ENCODE measurements at regions of chr2 and their contacts with region 1.

Region 1: DNA sequence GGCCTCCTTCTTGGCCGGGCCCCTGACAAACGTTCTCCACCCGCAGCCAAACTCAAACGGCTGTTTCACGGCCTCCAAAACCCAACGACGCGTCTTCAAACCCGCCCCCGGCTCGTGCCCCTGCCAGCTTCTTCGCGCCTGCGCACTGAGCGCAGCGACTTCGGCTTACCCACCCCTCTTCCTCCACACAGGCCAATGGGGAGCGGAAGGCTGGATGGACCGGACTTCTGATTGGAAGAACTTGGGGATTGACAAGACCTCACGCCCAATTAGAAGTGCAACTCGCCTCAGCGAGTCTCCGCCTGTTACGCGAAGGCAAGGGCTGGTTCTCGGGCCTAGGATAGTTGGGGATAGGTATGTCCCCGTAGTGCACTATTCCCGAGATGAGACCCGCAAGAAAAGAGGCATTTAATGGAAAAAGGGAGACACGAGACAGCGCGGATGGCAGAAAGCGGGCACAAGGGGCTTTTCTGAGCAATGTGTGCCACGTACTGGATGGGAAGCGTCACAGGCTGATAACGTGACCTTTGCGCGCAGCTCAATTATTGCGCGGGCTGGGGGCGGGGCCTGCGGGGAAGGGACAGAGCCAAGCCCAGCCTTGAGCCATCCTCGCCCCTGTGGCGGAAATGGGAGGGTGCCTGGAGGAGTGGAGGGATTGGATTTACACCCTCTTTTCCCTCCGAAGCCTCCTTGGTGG is at the start of gene LAPTM4A:
- DNase-seq: peak; percentile 100
- H3K4me3 ChIP-seq: peak within 1 kb of the TSS; percentile 51 to 97 (median 83)
- H3K27ac ChIP-seq: peak within 1 kb of the TSS; percentile 94
- H3K4me1 ChIP-seq: peaks cover 34% of the 10 kb centered on the region
- H3K27me3 ChIP-seq: peaks cover 10% of the 10 kb centered on the region in 2 experiments
- CTCF ChIP-seq: no peak
- POLR2A ChIP-seq: peak; percentile 38
- total RNA-seq, gene LAPTM4A: 154 and 155 TPM in 2 replicates

Region 2: DNA sequence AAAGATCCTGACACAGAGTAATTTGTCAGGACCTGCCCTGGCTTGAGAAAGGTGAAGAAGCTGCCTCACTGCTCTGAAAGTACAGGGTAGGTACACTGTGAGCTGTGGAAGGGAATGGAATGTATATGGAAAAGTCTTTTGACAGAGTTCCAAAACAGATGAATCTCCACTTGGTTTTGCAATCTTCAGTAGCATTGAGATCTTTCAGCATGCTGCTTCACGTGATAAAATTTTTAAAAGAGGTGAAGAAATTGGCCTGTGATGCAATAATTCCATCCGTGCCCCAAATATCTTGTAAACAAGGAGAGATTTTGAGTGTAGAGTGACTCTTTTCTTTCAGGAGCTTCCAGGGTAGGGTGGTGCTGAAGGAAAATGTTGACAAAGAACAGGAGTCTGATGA is 816.4 kb before region 1 on chr2:
- CTCF ChIA-PET with region 1: no interaction called
- POLR2A ChIA-PET with region 1: no interaction called
- dilution Hi-C with region 1: no loop called
- intact Hi-C with region 1: no loop called
- DNase-seq: no peak
- H3K4me3 ChIP-seq: no peak overlapping the region
- H3K27ac ChIP-seq: no peak overlapping the region
- H3K4me1 ChIP-seq: no peaks in the 10 kb centered on the region
- H3K27me3 ChIP-seq: no peaks in the 10 kb centered on the region
- CTCF ChIP-seq: no peak
- POLR2A ChIP-seq: no peak

Region 3: DNA sequence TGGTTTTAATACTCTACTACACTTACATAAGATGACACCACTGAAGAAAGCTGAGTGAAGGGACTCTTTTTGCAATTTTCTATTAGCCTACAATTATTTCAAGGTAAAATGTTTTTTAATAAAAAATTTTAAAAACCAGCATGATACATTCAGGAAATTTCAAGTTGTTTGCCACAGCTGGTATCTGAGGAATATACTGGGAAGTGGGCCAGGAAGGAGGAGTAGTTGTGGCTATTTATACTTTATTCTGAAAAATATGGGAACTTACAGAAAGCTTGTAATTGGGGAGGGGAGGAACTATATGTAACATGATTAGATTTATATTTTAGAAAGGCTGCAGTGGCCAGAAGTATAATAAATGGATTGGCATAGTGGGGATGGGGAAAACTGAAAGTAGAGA is 102.6 kb before region 1 on chr2:
- CTCF ChIA-PET with region 1: no interaction called
- POLR2A ChIA-PET with region 1: no interaction called
- dilution Hi-C with region 1: no loop called
- intact Hi-C with region 1: no loop called
- DNase-seq: peak; percentile 62
- H3K4me3 ChIP-seq: no peak overlapping the region
- H3K27ac ChIP-seq: no peak overlapping the region
- H3K4me1 ChIP-seq: no peaks in the 10 kb centered on the region
- H3K27me3 ChIP-seq: no peaks in the 10 kb centered on the region
- CTCF ChIP-seq: no peak
- POLR2A ChIP-seq: no peak

Region 4: GRCh38 chr2:20027705-20028434 is 23.8 kb before region 1 on chr2:
- CTCF ChIA-PET with region 1: interaction called, 14 read pairs
- POLR2A ChIA-PET with region 1: no interaction called
- dilution Hi-C with region 1: no loop called
- intact Hi-C with region 1: loop called (anchors 1 kb)
- DNase-seq: peak; percentile 89
- H3K4me3 ChIP-seq: peak overlapping the region in 1 of 3 experiments; percentile 3
- H3K27ac ChIP-seq: peak overlapping the region; percentile 74
- H3K4me1 ChIP-seq: peaks cover 21% of the 10 kb centered on the region
- H3K27me3 ChIP-seq: no peaks in the 10 kb centered on the region
- CTCF ChIP-seq: no peak
- POLR2A ChIP-seq: no peak

Region 5: GRCh38 chr2:20040489-20041172 is 11.0 kb before region 1 on chr2:
- CTCF ChIA-PET with region 1: interaction called, 51 read pairs
- POLR2A ChIA-PET with region 1: interaction called, 4 read pairs
- dilution Hi-C with region 1: no loop called
- intact Hi-C with region 1: loop called (anchors 1 kb)
- DNase-seq: peak; percentile 85
- H3K4me3 ChIP-seq: no peak overlapping the region
- H3K27ac ChIP-seq: peak overlapping the region; percentile 7
- H3K4me1 ChIP-seq: peaks cover 53% of the 10 kb centered on the region
- H3K27me3 ChIP-seq: no peaks in the 10 kb centered on the region
- CTCF ChIP-seq: no peak
- POLR2A ChIP-seq: no peak

Region 6: DNA sequence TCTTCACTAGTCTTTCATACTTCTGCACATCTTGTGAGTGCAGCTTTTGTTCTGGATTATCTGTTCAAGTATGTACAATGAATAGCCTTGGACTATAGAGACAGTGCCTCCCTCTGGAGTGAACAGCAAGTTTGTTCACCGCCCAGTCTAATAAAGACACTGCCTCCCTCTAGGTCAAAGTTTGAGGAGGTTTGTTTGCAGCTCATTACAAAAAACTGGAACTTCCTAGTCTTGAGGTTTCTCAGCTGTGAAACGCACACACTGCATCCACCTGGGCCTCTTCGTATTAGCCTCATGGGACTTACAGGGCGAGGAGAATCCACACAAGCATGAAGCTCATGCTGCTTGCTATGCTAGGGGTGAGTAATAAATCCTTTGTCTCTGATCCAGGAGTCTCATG is 25.8 kb after region 1 on chr2:
- CTCF ChIA-PET with region 1: interaction called, 11 read pairs
- POLR2A ChIA-PET with region 1: no interaction called
- dilution Hi-C with region 1: no loop called
- intact Hi-C with region 1: no loop called
- DNase-seq: no peak
- H3K4me3 ChIP-seq: no peak overlapping the region
- H3K27ac ChIP-seq: no peak overlapping the region
- H3K4me1 ChIP-seq: no peaks in the 10 kb centered on the region
- H3K27me3 ChIP-seq: peaks cover 7 to 14% of the 10 kb centered on the region in 2 experiments
- CTCF ChIP-seq: no peak
- POLR2A ChIP-seq: no peak

Region 7: DNA sequence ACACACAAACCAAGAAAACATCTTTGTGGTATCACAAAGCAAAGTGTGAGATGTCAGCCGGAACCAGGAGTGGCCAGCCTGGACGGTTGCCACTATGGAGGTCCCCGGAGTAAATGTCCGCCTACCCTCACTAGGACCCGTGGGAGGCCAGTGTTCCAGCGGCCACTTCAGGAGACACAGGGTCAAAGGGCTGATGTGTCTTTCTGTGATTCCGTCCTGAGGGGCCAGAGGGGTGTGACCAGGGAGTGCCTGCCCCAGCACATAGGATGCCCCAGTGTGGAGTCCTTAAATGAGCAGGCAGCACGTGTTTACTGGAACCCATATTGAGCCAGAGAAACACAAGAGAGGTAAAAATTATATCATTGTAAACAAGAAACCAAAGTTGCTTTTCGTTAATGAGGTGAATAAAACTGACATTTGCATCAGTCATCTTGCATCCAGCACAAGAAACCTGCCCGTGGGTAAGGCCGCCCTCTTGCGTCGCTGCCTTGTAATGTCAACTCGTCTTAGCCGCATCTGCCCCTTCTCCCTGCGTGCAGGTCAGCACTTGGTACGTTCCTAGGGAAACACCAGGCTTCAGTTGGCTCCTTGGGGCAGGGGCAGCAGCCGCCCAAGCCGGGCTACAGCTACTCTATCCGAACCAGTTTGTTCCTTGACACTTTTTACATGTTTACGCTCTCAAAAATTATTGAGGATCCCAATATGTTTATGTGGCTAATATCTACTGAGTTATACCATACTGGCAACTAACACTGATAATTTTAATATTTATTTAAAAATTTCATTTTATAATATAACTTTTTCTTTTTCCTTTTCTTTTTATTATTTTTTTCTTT is 46.4 kb after region 1 on chr2:
- CTCF ChIA-PET with region 1: interaction called, 20 read pairs
- POLR2A ChIA-PET with region 1: no interaction called
- dilution Hi-C with region 1: no loop called
- intact Hi-C with region 1: loop called (anchors 1 kb)
- DNase-seq: peak; percentile 94
- H3K4me3 ChIP-seq: no peak overlapping the region
- H3K27ac ChIP-seq: no peak overlapping the region
- H3K4me1 ChIP-seq: peaks cover 4% of the 10 kb centered on the region
- H3K27me3 ChIP-seq: no peaks in the 10 kb centered on the region
- CTCF ChIP-seq: peak; percentile 86 to 93
- POLR2A ChIP-seq: no peak

Region 8: DNA sequence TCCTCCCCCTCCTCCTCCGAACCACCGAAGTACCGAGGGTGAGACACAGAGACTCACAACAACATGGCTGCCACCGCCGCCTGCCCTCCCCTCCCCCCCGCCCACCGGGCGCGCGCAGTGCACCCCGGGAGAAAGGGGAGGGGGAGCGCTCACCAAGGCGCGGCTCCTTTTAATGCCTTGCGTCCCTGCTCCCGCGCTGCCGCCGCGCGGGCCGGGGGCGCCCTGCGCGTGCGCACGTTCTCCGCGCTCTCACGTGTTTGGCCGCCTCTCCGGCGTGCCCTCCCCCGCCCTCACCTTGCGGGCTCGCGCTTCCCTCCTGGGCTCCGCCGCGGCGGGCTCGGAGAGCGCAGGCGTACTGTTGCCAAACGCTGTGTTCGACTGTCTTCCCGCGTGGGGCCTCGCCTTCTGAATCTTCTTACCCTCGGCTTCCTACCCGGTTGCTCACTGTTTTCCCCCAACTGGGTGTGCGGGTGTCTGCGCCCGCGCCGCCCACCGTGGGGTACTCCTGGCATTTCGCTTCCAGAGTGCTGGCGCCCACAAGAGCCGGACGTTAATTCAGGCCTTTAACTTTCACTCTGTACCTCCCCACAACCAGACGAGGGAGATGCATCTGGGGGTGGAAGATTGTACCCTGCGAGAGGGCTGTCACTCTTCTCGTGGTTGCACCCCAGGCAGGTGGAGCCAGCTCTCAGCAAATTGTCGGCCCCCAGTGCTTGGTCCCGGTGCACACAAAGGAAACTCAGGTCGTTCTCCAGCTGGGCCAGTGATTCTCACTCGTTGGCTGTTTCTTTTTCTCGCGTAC is 299.3 kb after region 1 on chr2 and contains the start of gene PUM2:
- CTCF ChIA-PET with region 1: no interaction called
- POLR2A ChIA-PET with region 1: no interaction called
- dilution Hi-C with region 1: no loop called
- intact Hi-C with region 1: loop called (anchors 5 kb)
- DNase-seq: peak; percentile 98
- H3K4me3 ChIP-seq: peak within 1 kb of the TSS; percentile 99 to 100 (median 100)
- H3K27ac ChIP-seq: peak within 1 kb of the TSS; percentile 88
- H3K4me1 ChIP-seq: peaks cover 31% of the 10 kb centered on the region
- H3K27me3 ChIP-seq: no peaks in the 10 kb centered on the region
- CTCF ChIP-seq: no peak
- POLR2A ChIP-seq: peak; percentile 92
- total RNA-seq, gene PUM2: 79.2 and 83.7 TPM in 2 replicates